ENCODE measurements at regions of chr12 and their contacts with region 1.

Region 1: DNA sequence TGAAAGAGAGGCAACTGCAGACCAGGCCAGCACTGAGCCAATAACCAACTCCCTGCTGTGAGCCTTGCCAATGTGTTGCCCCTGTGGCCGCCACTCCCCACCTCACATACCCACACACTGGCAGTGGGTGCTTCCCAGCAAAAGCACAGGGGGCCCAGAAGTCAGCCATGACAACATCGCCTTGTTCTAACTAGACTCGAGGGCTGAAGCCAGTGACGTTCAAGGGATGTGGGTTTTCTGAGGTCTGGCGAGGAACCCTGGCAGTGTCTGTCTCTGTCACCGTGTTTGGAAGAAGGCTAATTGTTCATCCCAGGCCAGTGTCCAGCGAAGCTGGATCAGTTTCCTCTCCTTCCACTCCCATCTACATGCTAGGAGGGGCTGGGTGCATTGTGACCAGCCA is 311.8 kb upstream of the AMIGO2 start:
- DNase-seq: peak; percentile 84
- ATAC-seq: peak; percentile 48
- H3K4me3 Mint-ChIP-seq: peak overlapping the region; percentile 61
- H3K27ac Mint-ChIP-seq: peak overlapping the region; percentile 100
- H3K4me1 Mint-ChIP-seq: peaks cover 89% of the 10 kb centered on the region
- H3K27me3 Mint-ChIP-seq: no peaks in the 10 kb centered on the region

Region 2: GRCh38 chr12:46147144-46147543 is 1244.4 kb before region 1 on chr12:
- CTCF ChIA-PET with region 1: no interaction called
- POLR2A ChIA-PET with region 1: no interaction called
- intact Hi-C with region 1: no loop called
- DNase-seq: no peak
- ATAC-seq: no peak
- H3K4me3 Mint-ChIP-seq: no peak overlapping the region
- H3K27ac Mint-ChIP-seq: no peak overlapping the region
- H3K4me1 Mint-ChIP-seq: no peaks in the 10 kb centered on the region
- H3K27me3 Mint-ChIP-seq: peaks cover 4% of the 10 kb centered on the region

Region 3: DNA sequence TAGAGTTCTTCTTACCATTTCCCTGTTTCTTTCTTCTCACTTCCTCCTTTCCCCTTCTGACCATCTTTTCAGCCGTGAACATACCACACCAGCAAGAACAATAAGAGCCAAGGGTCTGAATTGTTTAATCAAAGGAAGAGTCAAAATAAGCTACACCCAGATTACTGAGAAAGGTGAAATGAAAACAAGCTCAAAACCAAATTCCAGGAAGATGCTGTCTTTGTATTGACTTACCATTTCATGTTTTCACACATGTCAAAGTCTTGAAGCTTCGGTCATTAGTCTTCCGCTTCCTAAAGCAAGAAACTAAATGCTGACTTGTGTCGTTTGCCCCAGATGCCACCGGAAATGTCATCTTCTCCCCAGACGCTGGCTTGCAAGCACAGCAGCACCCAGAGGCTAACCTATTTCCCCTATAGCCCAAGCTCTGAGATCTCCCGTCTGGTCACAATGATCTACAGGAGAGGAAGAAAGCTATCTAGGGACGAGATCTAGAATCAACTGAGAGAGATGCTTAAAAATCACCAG is 175.4 kb before region 1 on chr12:
- CTCF ChIA-PET with region 1: interaction called, 32 read pairs
- POLR2A ChIA-PET with region 1: interaction called, 10 read pairs
- intact Hi-C with region 1: loop called (anchors 1 kb)
- DNase-seq: peak; percentile 81
- ATAC-seq: peak; percentile 43
- H3K4me3 Mint-ChIP-seq: peak overlapping the region; percentile 89
- H3K27ac Mint-ChIP-seq: peak overlapping the region; percentile 96
- H3K4me1 Mint-ChIP-seq: peaks cover 38% of the 10 kb centered on the region
- H3K27me3 Mint-ChIP-seq: no peaks in the 10 kb centered on the region

Region 4: GRCh38 chr12:47350062-47350408 is 41.5 kb before region 1 on chr12:
- CTCF ChIA-PET with region 1: interaction called, 12 read pairs
- POLR2A ChIA-PET with region 1: no interaction called
- intact Hi-C with region 1: loop called (anchors 1 kb)
- DNase-seq: no peak
- ATAC-seq: peak; percentile 88
- H3K4me3 Mint-ChIP-seq: peak overlapping the region; percentile 53
- H3K27ac Mint-ChIP-seq: peak overlapping the region; percentile 98
- H3K4me1 Mint-ChIP-seq: peaks cover 79% of the 10 kb centered on the region
- H3K27me3 Mint-ChIP-seq: no peaks in the 10 kb centered on the region

Region 5: GRCh38 chr12:47356129-47356700 is 35.4 kb before region 1 on chr12:
- CTCF ChIA-PET with region 1: interaction called, 12 read pairs
- POLR2A ChIA-PET with region 1: interaction called, 5 read pairs
- intact Hi-C with region 1: loop called (anchors 1 kb)
- DNase-seq: peak; percentile 61
- ATAC-seq: peak; percentile 74
- H3K4me3 Mint-ChIP-seq: peak overlapping the region; percentile 58
- H3K27ac Mint-ChIP-seq: peak overlapping the region; percentile 100
- H3K4me1 Mint-ChIP-seq: peaks cover 86% of the 10 kb centered on the region
- H3K27me3 Mint-ChIP-seq: no peaks in the 10 kb centered on the region

Region 6: DNA sequence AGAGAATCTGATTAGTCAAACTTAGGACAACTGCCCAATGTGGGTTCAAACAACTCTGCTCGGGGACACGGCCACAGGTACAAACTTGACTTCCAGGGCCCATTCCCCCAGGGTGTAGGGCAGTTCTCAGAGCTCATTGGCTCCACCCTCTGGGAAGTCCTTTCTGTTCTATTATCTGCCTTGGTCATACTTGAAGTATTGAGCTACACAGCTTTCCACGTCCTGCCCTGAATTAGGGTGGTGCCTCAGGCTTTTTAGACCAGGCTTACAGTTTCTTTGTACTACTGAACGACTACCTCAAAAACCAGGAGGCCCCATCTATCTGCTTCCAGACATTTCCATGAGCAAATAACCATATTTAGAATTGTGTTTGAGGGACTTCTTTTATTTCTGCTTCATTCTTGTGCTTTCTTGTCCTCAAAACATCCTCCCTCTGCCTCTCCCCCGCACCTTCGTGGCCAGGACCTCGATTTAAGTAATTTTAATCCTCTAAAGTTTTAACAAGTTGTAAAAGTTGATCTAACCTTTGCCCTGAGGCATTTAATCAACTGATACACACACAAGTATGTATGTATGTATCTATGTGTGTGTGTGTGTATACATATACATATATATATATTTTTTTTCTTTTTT is 30.1 kb before region 1 on chr12:
- CTCF ChIA-PET with region 1: interaction called, 12 read pairs
- POLR2A ChIA-PET with region 1: interaction called, 5 read pairs
- intact Hi-C with region 1: loop called (anchors 1 kb)
- DNase-seq: peak; percentile 70
- ATAC-seq: peak; percentile 82
- H3K4me3 Mint-ChIP-seq: peak overlapping the region; percentile 74
- H3K27ac Mint-ChIP-seq: peak overlapping the region; percentile 99
- H3K4me1 Mint-ChIP-seq: peaks cover 62% of the 10 kb centered on the region
- H3K27me3 Mint-ChIP-seq: no peaks in the 10 kb centered on the region

Region 7: DNA sequence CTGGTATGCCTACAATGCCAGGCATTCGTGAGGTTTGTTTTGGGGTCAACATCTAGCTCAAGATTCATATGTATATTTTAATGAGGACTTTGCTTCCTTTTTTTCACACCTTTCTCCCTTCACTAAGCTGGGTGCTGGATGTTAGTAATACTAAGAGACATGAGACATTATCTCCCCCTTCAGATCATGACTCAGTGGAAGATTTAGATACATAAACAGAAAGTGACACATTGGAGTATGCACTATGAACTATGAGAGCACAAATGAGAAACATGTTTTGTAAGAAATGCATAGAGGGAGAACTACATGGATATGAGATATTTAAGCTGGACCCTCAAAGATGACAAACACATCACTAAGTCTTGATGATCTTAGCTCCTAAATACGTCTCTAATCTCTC is 27.9 kb after region 1 on chr12:
- CTCF ChIA-PET with region 1: interaction called, 27 read pairs
- POLR2A ChIA-PET with region 1: interaction called, 5 read pairs
- intact Hi-C with region 1: loop called in 1 of 2 experiments (anchors 1 kb)
- DNase-seq: no peak
- ATAC-seq: peak; percentile 93
- H3K4me3 Mint-ChIP-seq: no peak overlapping the region
- H3K27ac Mint-ChIP-seq: peak overlapping the region; percentile 56
- H3K4me1 Mint-ChIP-seq: peaks cover 56% of the 10 kb centered on the region
- H3K27me3 Mint-ChIP-seq: no peaks in the 10 kb centered on the region

Region 8: DNA sequence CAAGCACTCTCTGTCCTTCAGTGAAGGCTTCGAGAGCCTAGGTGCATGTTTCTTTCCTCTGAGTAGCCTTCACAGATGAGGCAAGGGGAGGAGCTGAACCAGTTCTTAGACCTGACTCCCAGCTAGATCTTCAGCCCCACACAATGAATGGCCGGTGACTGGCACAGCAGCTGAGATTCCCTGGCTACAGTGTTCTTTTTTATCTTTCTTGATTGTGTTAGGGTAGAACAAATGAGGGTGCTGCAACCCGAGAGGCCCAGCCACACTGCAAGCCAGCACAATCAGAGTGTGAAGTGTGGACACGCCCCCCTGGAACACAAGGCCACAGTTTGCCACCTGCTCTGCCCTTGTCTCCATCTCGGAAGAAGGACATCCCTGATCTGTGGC is 631.8 kb after region 1 on chr12:
- CTCF ChIA-PET with region 1: no interaction called
- POLR2A ChIA-PET with region 1: no interaction called
- intact Hi-C with region 1: no loop called
- DNase-seq: no peak
- ATAC-seq: no peak
- H3K4me3 Mint-ChIP-seq: no peak overlapping the region
- H3K27ac Mint-ChIP-seq: no peak overlapping the region
- H3K4me1 Mint-ChIP-seq: no peaks in the 10 kb centered on the region
- H3K27me3 Mint-ChIP-seq: peaks cover 8% of the 10 kb centered on the region